Mucosa of descending colon (tissue), 3 donors: ENCODE measurements at regions of chr4 and their contacts with region 1.

Region 1: DNA sequence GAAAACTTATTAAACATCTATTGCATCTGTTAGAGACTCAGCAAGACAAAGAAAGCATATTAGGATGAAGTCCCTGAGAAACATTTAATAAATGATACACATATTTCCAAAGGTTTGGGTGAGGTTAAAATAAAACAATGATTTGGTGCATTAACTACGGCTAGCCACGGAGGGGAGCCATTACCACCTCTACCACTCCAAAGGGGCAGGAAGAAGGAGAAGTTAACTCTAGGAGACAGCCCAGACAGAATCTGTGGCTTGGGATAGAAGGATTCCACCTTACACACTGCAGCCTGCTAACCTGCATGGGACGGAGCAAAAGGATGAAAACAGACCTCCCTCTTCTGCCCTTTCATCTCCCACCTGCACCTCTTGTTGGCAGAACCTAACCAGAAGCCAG is 189.1 kb upstream of the C1QTNF7 start:
- DNase-seq: no peak
- ATAC-seq: peak; percentile 70
- H3K4me3 ChIP-seq: no peak overlapping the region
- H3K4me1 ChIP-seq: no peaks in the 10 kb centered on the region
- CTCF ChIP-seq: no peak

Region 2: DNA sequence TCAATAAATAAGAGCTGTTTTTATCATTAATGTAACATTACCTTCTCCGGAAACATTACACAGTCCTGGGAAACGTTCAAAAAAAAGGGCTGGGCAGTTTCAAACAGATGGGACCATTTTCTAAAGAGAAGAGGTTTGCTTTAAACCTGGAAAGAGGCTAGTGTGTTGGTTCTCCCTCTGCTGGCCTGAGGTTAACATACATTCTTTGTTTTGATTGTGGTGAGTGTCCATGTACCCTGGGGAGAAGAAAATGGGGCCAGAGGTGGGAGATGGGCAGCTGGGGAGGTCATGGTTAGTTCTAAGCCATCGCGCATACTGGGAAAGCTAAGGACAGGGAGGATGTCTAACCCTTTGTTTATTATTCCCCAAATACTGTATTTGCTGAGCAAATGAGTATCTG is 41.7 kb before region 1 on chr4:
- intact Hi-C with region 1: no loop called
- DNase-seq: peak in 1 of 3 donors; percentile 5
- ATAC-seq: no peak
- H3K4me3 ChIP-seq: no peak overlapping the region
- H3K4me1 ChIP-seq: no peaks in the 10 kb centered on the region
- CTCF ChIP-seq: no peak

Region 3: GRCh38 chr4:15396157-15396800 is 157.6 kb after region 1 on chr4:
- intact Hi-C with region 1: loop called (anchors 10 kb)
- DNase-seq: peak in 2 of 3 donors; percentile 30 to 73
- ATAC-seq: peak; percentile 81
- H3K4me3 ChIP-seq: no peak overlapping the region
- H3K4me1 ChIP-seq: no peaks in the 10 kb centered on the region
- CTCF ChIP-seq: peak; percentile 48

Region 4: DNA sequence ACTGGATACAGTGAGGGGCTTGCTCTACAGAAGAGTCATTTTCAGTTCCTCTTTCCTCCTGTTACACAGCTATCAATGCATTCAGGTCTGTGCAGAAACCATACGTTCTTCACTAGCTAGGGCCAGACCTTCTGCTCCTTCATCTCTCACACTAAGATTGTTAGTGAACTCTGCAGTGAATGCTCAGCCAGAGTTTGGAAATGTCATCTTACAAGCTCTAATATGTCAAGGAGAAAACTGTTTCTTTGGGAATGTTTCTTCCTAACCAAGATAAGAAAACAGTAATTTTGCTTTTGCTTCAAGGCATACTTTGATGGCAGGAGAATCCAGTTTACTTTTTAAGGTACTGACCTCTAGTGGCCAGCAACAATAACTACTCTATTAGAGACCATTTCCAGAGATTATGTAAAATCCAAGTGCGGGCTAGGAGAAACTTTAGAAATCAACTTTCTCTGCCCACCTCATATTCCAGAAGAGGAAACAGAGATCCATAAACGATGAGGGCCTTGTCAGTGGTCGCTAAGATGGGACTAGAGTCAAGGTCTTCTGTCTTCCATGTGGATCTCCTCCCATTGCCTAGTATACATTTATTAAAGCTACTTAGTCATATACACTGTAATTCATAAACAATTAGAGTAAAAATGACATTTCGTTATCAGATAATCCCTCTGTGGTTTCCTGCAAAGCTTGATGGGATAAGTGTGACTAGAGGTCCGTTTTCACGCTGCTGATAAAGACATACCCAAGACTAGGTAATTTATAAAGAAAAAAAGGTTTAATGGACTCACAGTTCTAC is 218.9 kb after region 1 on chr4:
- intact Hi-C with region 1: loop called (anchors 5 kb)
- DNase-seq: no peak
- ATAC-seq: peak; percentile 67
- H3K4me3 ChIP-seq: no peak overlapping the region
- H3K4me1 ChIP-seq: no peaks in the 10 kb centered on the region
- CTCF ChIP-seq: no peak

Region 5: GRCh38 chr4:15836362-15836761 is 597.6 kb after region 1 on chr4:
- intact Hi-C with region 1: no loop called
- DNase-seq: no peak
- ATAC-seq: peak; percentile 45
- H3K4me3 ChIP-seq: no peak overlapping the region
- H3K4me1 ChIP-seq: no peaks in the 10 kb centered on the region
- CTCF ChIP-seq: no peak